A549 (cell line): ENCODE measurements at regions of chr2 and their contacts with region 1.

Region 1: DNA sequence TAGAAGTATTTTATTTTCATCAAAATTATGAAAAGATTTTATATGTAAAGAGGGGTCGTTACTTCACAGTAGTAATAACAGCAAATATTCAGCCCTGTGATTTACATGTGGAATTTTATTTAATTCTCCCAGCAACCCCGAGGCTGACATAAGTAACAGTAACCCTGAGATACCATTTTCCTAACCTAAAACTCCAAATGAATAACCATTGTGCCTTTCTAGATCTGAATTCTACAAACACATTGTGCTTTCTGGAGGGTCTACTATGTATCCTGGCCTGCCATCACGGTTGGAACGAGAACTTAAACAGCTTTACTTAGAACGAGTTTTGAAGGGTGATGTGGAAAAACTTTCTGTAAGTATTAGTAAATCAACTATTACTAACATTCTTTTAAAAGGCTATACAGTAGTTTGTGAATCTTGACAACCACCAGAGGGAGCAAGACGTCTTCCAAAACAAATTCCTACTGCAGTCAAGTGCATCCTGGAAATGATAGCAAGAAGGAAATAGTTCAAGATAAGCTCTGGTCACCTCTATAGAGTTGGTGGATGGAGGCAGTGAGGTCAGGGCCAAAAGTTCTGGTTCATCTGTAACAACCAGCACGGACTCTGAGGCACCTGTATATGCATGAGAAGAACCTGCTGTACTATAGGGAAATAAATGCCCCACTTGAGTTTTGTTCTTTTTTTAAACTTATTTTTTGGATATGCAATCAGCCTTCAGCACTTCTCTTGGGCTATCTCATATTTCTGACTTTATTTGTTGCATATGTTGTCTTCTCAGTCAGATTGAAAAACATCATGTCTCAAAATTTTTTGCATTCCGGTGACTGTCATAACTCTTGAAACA is 37.4 kb downstream of the ACTR2 start:
- DNase-seq: peak; percentile 46 to 92
- ATAC-seq: peak; percentile 86 to 91
- H3K4me3 ChIP-seq: no peak overlapping the region
- H3K27ac ChIP-seq: no peak overlapping the region
- H3K4me1 ChIP-seq: peaks cover 21% of the 10 kb centered on the region; the same call in 2 of the 3 replicates
- CTCF ChIP-seq: peak; percentile 97
- EP300 ChIP-seq: no peak
- POLR2A ChIP-seq: no peak
- RAD21 ChIP-seq: peak; percentile 95 to 96

Region 2: GRCh38 chr2:65081232-65081685 is 183.8 kb before region 1 on chr2:
- CTCF ChIA-PET with region 1: no interaction called
- POLR2A ChIA-PET with region 1: no interaction called
- DNase-seq: no peak
- ATAC-seq: peak in 1 of 2 experiments; percentile 21; a peak in 3 of 6 replicates
- H3K4me3 ChIP-seq: no peak overlapping the region
- H3K27ac ChIP-seq: no peak overlapping the region
- H3K4me1 ChIP-seq: peaks cover 5% of the 10 kb centered on the region; the same call in 2 of the 3 replicates
- CTCF ChIP-seq: no peak
- EP300 ChIP-seq: no peak
- POLR2A ChIP-seq: no peak
- RAD21 ChIP-seq: no peak

Region 3: DNA sequence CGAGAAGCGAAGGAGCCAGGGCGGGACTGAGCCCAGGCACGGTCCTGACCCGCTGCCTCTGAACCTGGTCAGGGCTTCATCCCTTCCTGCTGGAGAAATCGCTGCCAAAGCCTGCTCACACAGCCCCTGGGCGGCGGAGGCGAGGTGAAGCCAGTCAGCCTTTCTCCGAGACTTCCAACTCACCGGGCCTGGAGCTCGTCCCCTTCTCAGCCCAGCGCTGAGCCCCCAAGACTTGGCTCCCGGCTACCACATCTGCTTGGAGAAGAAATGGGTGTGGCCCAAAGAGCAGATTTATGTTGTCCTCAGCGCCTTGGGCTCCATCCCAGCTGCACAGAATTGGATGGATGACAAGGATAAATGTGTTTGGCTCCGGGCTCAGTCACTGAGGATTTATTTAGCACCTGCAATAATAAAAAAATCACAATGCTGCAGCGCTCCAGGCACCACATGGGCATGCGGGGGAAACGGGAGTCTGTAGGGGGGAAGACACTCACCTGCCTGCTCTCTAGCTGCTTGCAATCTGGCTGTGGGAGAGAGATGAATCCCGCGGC is 27.5 kb after region 1 on chr2:
- CTCF ChIA-PET with region 1: interaction called, 21 read pairs
- POLR2A ChIA-PET with region 1: no interaction called
- DNase-seq: no peak
- ATAC-seq: no peak
- H3K4me3 ChIP-seq: no peak overlapping the region
- H3K27ac ChIP-seq: no peak overlapping the region
- H3K4me1 ChIP-seq: no peaks in the 10 kb centered on the region
- CTCF ChIP-seq: no peak
- EP300 ChIP-seq: no peak
- POLR2A ChIP-seq: no peak
- RAD21 ChIP-seq: no peak

Region 4: DNA sequence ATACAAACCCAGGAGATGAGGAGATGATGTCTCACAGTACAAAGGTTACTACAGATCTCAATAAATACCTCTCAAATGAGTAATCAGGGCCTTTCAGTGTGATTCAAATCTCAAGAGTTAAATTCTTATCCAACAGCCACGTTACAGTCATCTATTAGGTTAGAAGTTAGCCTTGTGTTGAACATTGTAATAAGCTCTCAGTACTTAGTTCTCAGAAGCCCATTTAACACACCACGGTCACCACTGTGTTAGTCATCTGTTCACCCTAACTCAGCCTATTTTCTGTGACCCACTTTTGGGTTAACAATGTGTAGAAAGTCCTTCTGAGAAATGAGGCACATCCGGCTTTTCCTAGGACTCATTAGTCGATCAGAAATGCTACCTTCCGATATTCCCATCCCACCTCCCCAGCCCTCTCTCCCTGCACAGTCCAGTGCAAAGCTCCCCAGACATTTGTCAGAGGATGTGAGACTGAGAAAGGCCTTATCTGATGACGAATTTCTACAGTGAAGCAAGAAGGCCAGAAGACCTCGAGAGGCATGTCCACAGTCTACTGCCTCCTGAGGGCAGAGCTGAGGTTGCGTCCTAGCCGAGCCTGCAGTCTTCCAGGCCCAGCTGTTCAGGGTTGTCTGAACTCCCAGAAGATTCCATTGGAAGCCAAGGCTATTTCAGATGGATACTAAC is 55.1 kb after region 1 on chr2:
- CTCF ChIA-PET with region 1: interaction called, 11 read pairs
- POLR2A ChIA-PET with region 1: no interaction called
- DNase-seq: peak; percentile 89 to 91
- ATAC-seq: peak; percentile 94 to 96
- H3K4me3 ChIP-seq: peak overlapping the region; percentile 17; the same call in 1 of the 3 replicates
- H3K27ac ChIP-seq: peak overlapping the region; percentile 76 to 85
- H3K4me1 ChIP-seq: peaks cover 27% of the 10 kb centered on the region
- CTCF ChIP-seq: peak; percentile 52; the same call in 2 of the 3 replicates
- EP300 ChIP-seq: no peak; a peak in 1 of 5 replicates
- POLR2A ChIP-seq: no peak
- RAD21 ChIP-seq: peak; percentile 33 to 49; a peak in 4 of 5 replicates

Region 5: DNA sequence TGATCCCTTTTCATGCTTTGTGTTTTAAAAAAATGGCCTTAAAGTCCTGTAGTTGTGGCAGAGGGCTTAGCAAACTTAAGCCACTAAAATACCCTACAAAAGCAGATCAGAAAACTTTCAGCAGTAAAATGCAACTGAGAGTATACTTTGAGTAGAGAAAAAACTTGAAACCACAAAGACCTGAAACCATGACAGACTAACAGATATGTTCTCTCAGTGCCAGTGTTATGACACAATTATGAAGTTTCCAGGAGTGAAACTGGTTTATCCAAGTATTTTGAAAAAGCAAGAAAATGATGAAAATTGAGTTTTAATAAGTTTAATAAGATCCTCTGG is 92.9 kb after region 1 on chr2:
- CTCF ChIA-PET with region 1: interaction called, 12 read pairs
- POLR2A ChIA-PET with region 1: no interaction called
- DNase-seq: no peak
- ATAC-seq: no peak
- H3K4me3 ChIP-seq: no peak overlapping the region
- H3K27ac ChIP-seq: no peak overlapping the region
- H3K4me1 ChIP-seq: peaks cover 13% of the 10 kb centered on the region; the same call in 2 of the 3 replicates
- CTCF ChIP-seq: no peak
- EP300 ChIP-seq: no peak
- POLR2A ChIP-seq: no peak
- RAD21 ChIP-seq: no peak

Region 6: DNA sequence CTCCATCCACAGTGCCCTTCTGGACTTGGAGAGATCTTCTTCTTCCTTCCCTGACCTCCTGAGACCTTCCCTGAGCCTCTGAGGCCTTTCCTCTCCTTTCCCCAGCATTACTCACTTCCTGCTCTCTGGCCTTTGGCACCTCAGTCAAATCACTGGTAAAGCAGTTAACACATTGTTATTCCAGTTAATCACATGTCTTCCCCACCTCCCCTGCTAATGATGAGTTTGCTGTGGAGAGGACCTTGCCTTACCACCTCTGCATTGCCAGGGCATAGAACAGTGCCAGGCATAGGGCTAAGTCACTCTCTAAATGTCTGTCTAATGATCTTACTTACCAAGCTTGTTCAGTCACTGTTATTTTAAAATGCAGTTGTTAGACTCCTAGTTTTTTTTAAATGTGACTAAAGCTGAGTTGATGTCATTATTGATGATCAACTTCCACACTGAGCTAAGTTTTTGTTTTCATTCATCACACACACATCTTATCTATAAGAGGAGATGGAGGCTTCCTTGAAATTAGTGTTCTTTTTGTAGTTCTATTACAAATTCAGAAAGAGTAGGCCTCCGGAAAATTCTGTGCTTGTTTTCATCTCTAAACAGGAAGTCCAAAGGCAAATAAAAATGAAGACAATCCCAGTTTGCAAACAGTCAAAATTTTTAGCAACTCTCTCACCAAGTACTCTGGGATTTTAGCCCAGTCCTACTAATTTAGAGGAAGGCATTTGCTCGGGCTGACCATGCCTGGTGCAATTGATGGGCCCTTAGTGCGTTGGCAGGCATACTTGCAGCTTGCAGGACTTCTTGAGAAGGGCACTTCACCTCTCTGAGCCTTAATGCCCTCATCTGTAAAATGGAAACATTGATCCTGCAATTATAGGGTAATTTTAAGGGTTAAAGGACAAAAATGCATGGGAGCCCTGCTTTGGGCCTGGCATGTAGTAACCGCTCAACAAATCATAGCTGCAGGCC is 281.1 kb after region 1 on chr2:
- CTCF ChIA-PET with region 1: interaction called, 17 read pairs
- POLR2A ChIA-PET with region 1: no interaction called
- DNase-seq: no peak
- ATAC-seq: no peak; a peak in 2 of 6 replicates
- H3K4me3 ChIP-seq: no peak overlapping the region
- H3K27ac ChIP-seq: peak overlapping the region in 1 of 2 experiments; percentile 20; a peak in 1 of 6 replicates
- H3K4me1 ChIP-seq: peaks cover 7% of the 10 kb centered on the region; the same call in 1 of the 3 replicates
- CTCF ChIP-seq: no peak
- EP300 ChIP-seq: no peak
- POLR2A ChIP-seq: no peak
- RAD21 ChIP-seq: no peak

Region 7: DNA sequence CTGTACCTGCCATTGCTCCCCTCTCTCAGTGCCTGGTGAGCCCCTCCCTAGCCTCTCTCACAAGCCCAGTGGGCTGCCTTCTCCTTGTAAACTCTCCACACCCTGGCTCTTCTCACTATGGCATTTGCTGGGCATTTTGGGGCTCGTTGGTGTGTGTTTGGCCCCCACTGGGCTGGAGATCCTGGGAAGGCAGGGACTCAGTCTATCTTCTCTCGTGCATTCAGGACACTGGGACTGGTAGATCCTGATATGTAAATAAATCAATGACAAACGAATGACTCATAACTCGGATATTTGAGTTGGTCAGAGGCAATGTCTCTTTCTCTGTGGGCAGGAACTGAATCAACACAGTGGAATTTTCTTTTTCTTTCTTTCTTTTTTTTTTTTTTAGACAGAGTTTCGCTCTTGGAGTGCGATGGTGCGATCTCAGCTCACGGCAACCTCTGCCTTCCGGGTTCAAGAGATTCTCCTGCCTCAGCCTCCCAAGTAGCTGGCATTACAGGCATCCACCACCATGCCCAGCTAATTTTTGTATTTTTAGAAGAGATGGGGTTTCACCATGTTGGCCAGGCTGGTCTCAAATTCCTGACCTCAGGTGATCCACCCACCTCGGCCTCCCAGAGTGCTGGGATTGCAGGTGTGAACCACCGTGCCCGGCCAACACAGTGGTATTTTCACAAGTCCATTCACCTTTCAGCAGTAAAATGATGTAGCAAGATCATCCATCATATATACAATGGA is 312.0 kb after region 1 on chr2:
- CTCF ChIA-PET with region 1: interaction called, 16 read pairs
- POLR2A ChIA-PET with region 1: no interaction called
- DNase-seq: peak; percentile 82 to 91
- ATAC-seq: peak; percentile 92 to 95
- H3K4me3 ChIP-seq: peak overlapping the region; percentile 21; the same call in 2 of the 3 replicates
- H3K27ac ChIP-seq: peak overlapping the region; percentile 79 to 88
- H3K4me1 ChIP-seq: peaks cover 28% of the 10 kb centered on the region
- CTCF ChIP-seq: no peak
- EP300 ChIP-seq: 0 out of 5 replicates have a peak, but pooled peaks of 1 of the 2 experiments have one; percentile 27
- POLR2A ChIP-seq: no peak
- RAD21 ChIP-seq: no peak